H1 (cell line): ENCODE measurements at regions of chr17 and their contacts with region 1.

Region 1: DNA sequence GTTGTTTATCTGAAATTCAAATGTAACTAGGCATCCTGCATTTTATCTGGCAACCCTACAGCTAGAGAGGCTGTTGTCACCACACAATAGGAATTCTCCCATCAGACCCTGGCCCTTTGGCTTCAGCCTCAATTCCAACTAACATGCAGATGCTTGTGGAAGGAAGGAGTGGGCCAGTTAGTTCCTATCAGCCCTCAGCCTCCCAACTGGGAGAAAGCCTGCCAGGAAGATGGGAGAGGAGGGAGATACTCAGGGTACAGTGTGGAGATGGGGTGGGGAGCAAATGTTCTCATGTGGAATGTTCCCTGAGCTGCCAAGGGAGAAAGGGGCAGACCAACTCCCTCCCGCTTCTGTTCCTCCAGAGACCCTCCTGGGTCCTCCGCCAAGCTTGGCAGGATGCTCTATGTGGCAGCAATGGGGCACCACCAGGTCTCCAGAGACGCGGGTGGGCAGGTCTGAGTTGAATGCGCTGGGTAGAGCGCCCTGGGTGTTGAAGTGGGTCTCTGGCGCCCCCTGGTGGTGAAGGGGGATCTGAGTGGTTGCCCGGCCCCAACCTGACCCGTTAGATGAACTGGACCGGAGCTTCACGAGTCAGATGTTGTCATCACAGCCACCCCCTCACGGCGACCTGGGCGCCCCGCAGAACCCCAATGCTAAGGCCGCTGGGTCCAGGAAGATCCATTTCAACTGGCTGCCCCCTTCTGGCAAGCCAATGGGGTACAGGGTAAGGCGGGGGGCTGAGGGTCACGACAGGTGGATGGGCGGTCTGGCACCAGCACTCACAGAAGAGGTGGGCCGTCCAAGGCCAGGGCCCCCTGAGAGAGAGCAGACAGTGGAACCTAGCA is 15.2 kb downstream of the GALK1 start:
- DNase-seq: peak; percentile 54 to 98
- H3K4me3 ChIP-seq: no peak overlapping the region
- H3K27ac ChIP-seq: no peak overlapping the region
- H3K4me1 ChIP-seq: peaks cover 0 to 5% (median 2%) of the 10 kb centered on the region in 4 experiments; a peak in 4 of 7 replicates
- H3K27me3 ChIP-seq: peaks cover 0 to 2% (median 0%) of the 10 kb centered on the region in 4 experiments; a peak in 1 of 7 replicates
- CTCF ChIP-seq: peak; percentile 81 to 92 (median 87)
- EP300 ChIP-seq: no peak
- POLR2A ChIP-seq: no peak
- RAD21 ChIP-seq: peak; percentile 76 to 81

Region 2: DNA sequence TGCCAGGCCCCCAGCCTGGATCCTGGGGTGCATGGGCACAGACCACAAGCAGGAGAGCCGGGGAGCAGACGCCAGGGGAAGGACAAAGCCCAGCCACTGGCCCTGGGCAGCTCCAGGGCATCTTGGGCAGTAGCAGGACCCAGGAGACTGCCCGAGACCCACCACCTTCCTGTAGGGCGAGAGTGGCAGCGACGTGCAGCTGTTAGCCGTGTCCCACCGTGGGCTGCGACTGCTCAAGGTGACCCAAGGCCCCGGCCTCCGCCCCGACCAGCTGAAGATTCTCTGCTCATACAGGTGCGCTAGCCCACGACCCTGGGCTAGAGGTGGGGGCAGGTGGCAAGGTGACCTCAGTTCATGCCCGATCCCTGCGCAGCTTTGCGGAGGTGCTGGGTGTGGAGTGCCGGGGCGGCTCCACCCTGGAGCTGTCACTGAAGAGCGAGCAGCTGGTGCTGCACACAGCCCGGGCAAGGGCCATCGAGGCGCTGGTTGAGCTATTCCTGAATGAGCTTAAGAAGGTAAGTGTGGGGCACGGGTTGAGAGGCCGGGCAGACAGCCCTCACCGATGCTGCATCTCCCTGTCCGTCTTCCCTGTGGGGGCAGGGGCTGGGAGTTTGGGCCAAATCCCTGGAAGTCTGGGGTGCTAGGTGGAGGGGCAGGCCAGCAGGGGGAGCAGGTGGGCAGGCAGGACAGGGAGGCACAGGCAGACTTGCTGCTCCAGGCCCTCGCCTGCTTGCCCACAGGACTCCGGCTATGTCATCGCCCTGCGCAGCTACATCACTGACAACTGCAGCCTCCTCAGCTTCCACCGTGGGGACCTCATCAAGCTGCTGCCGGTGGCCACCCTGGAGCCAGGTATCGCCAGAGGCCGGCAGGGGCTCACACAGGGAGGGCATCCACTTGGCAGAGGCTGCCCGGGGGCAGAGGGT is 130.0 kb before region 1 on chr17:
- CTCF ChIA-PET with region 1: interaction called, 60 read pairs
- POLR2A ChIA-PET with region 1: interaction called, 4 read pairs
- DNase-seq: peak; percentile 70 to 96
- H3K4me3 ChIP-seq: no peak overlapping the region
- H3K27ac ChIP-seq: no peak overlapping the region
- H3K4me1 ChIP-seq: peaks cover 0 to 4% (median 1%) of the 10 kb centered on the region in 4 experiments; a peak in 4 of 7 replicates
- H3K27me3 ChIP-seq: no peaks in the 10 kb centered on the region; a peak in 2 of 7 replicates
- CTCF ChIP-seq: peak; percentile 82 to 96 (median 94)
- EP300 ChIP-seq: no peak
- POLR2A ChIP-seq: no peak; a peak in 1 of 3 replicates
- RAD21 ChIP-seq: peak; percentile 53 to 61

Region 3: GRCh38 chr17:75652915-75653549 is 96.7 kb before region 1 on chr17:
- CTCF ChIA-PET with region 1: interaction called, 155 read pairs
- POLR2A ChIA-PET with region 1: interaction called, 4 read pairs
- DNase-seq: peak in 1 of 2 experiments; percentile 77
- H3K4me3 ChIP-seq: no peak overlapping the region
- H3K27ac ChIP-seq: no peak overlapping the region
- H3K4me1 ChIP-seq: no peaks in the 10 kb centered on the region
- H3K27me3 ChIP-seq: no peaks in the 10 kb centered on the region
- CTCF ChIP-seq: peak; percentile 92 to 94 (median 93)
- EP300 ChIP-seq: no peak
- POLR2A ChIP-seq: no peak
- RAD21 ChIP-seq: peak; percentile 69 to 77

Region 4: GRCh38 chr17:75684924-75685323 is 64.8 kb before region 1 on chr17:
- CTCF ChIA-PET with region 1: interaction called, 40 read pairs
- POLR2A ChIA-PET with region 1: no interaction called
- DNase-seq: no peak
- H3K4me3 ChIP-seq: no peak overlapping the region
- H3K27ac ChIP-seq: no peak overlapping the region
- H3K4me1 ChIP-seq: no peaks in the 10 kb centered on the region
- H3K27me3 ChIP-seq: no peaks in the 10 kb centered on the region
- CTCF ChIP-seq: no peak
- EP300 ChIP-seq: no peak
- POLR2A ChIP-seq: no peak
- RAD21 ChIP-seq: no peak

Region 5: DNA sequence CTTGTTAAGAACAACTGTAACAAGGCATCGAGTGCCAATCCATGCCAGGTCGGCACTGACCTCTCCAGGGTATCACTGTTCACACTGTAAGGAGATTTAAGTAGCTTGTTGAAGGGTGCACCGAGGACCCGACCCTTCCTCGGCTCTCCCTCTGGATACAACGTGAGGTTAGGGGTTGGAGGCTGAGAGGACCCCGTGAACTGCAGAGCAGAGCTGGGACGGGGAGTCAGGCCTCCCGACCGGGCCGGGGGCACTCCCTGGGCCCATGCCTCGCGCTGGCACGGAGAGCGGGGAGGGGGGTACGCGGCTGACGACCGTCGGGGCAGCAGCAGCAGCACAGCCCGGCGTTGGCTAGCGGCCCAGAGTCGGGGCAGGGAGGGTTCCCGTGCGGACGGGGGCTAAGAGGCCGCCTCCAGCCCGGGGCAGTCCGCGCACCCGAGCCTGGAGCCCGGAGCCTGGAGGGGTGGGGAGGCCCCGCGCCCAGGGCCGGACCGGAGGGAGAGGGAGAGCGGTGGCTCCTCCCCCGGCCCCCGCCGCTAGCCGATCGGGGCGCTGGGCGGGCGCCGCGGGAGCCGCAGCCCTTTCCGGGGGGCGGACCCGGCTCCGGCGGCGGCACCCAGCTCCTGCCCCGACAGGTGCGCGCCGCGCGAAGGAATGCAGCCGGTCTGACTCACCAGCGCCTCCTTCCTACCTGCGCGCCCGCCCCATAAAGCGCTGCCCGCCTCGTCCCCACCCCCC is 28.9 kb before region 1 on chr17 and contains the start of gene ITGB4:
- CTCF ChIA-PET with region 1: interaction called, 64 read pairs
- POLR2A ChIA-PET with region 1: interaction called, 7 read pairs
- DNase-seq: peak; percentile 50 to 84
- H3K4me3 ChIP-seq: peak within 1 kb of the TSS; percentile 49 to 74 (median 50)
- H3K27ac ChIP-seq: no peak within 1 kb of the TSS
- H3K4me1 ChIP-seq: peaks cover 0 to 8% (median 4%) of the 10 kb centered on the region in 4 experiments; a peak in 3 of 7 replicates
- H3K27me3 ChIP-seq: peaks cover 4 to 30% (median 17%) of the 10 kb centered on the region in 4 experiments; a peak in 6 of 7 replicates
- CTCF ChIP-seq: peak in 2 of 3 experiments; percentile 1 to 33; a peak in 2 of 4 replicates
- EP300 ChIP-seq: peak in 1 of 2 experiments; percentile 26; a peak in 1 of 3 replicates
- POLR2A ChIP-seq: peak in 1 of 2 experiments; percentile 43; a peak in 1 of 3 replicates
- RAD21 ChIP-seq: no peak
- total RNA-seq, gene ITGB4: 5.4 and 5.6 TPM in 2 replicates

Region 6: DNA sequence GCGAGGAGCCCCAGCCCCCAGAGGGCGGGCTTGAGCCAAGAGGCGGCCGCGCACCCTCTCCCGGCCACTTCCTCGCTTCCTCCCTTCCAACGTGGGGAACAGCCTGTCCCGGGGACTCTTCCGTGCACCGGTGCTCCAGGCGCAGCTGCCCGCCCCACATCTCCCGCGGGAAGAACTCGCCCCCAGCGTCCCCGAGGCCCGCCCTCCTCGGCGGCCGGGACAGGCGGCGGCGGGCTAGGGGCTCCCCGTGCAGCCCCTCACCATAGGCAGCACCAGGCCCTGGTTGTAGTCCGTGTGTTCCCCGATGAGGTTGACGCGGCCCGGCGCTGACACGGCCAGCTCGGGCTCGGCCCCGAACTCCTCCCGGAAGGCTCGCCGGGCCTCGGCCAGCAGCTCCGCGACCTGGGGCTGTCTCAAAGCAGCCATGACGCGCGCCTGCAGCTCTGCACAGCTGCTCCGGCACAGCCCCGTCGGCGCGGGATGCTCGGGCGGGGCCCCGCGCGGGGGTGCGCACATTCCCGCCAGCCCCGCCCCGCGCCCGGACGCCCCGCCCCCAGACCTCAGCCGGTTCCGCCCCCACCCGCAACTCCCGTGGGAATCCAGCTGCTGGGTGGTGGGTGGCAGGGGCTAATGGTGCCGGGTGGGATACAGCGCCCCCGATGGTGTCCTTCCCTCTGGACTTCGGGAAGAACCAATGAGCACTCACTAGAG is 15.1 kb after region 1 on chr17 and contains the start of gene GALK1:
- CTCF ChIA-PET with region 1: interaction called, 359 read pairs
- POLR2A ChIA-PET with region 1: interaction called, 13 read pairs
- DNase-seq: peak in 1 of 2 experiments; percentile 82
- H3K4me3 ChIP-seq: peak within 1 kb of the TSS; percentile 50 to 88 (median 62)
- H3K27ac ChIP-seq: no peak within 1 kb of the TSS
- H3K4me1 ChIP-seq: peaks cover 0 to 8% (median 6%) of the 10 kb centered on the region in 4 experiments; a peak in 5 of 7 replicates
- H3K27me3 ChIP-seq: peaks cover 0 to 2% (median 0%) of the 10 kb centered on the region in 4 experiments; a peak in 1 of 7 replicates
- CTCF ChIP-seq: peak; percentile 67 to 74 (median 67)
- EP300 ChIP-seq: no peak
- POLR2A ChIP-seq: no peak
- RAD21 ChIP-seq: peak; percentile 31 to 45
- total RNA-seq, gene GALK1: 31.0 and 34.1 TPM in 2 replicates

Region 7: GRCh38 chr17:75795820-75796607 is 46.2 kb after region 1 on chr17:
- CTCF ChIA-PET with region 1: no interaction called
- POLR2A ChIA-PET with region 1: no interaction called
- DNase-seq: no peak
- H3K4me3 ChIP-seq: no peak overlapping the region
- H3K27ac ChIP-seq: no peak overlapping the region
- H3K4me1 ChIP-seq: no peaks in the 10 kb centered on the region
- H3K27me3 ChIP-seq: no peaks in the 10 kb centered on the region
- CTCF ChIP-seq: no peak
- EP300 ChIP-seq: no peak
- POLR2A ChIP-seq: no peak
- RAD21 ChIP-seq: no peak

Region 8: GRCh38 chr17:75827252-75828115 is 77.7 kb after region 1 on chr17:
- CTCF ChIA-PET with region 1: interaction called, 22 read pairs
- POLR2A ChIA-PET with region 1: interaction called, 6 read pairs
- DNase-seq: peak; percentile 44 to 96
- H3K4me3 ChIP-seq: peak overlapping the region in 3 of 4 experiments; percentile 27 to 53 (median 45); a peak in 6 of 8 replicates
- H3K27ac ChIP-seq: peak overlapping the region; percentile 43; the same call in 1 of the 2 replicates
- H3K4me1 ChIP-seq: peaks cover 0 to 28% (median 23%) of the 10 kb centered on the region in 4 experiments; a peak in 6 of 7 replicates
- H3K27me3 ChIP-seq: no peaks in the 10 kb centered on the region
- CTCF ChIP-seq: peak; percentile 92 to 97 (median 95)
- EP300 ChIP-seq: 0 out of 3 replicates have a peak, but pooled peaks of 1 of the 2 experiments have one; percentile 13
- POLR2A ChIP-seq: peak in 1 of 2 experiments; percentile 60; a peak in 2 of 3 replicates
- RAD21 ChIP-seq: peak; percentile 27 to 52; a peak in 3 of 4 replicates

Region 9: GRCh38 chr17:75869282-75870141 is 119.7 kb after region 1 on chr17:
- CTCF ChIA-PET with region 1: no interaction called
- POLR2A ChIA-PET with region 1: no interaction called
- DNase-seq: no peak
- H3K4me3 ChIP-seq: no peak overlapping the region
- H3K27ac ChIP-seq: no peak overlapping the region
- H3K4me1 ChIP-seq: peaks cover 0 to 6% (median 2%) of the 10 kb centered on the region in 4 experiments; a peak in 5 of 7 replicates
- H3K27me3 ChIP-seq: no peaks in the 10 kb centered on the region
- CTCF ChIP-seq: no peak
- EP300 ChIP-seq: no peak
- POLR2A ChIP-seq: no peak
- RAD21 ChIP-seq: no peak

Region 10: DNA sequence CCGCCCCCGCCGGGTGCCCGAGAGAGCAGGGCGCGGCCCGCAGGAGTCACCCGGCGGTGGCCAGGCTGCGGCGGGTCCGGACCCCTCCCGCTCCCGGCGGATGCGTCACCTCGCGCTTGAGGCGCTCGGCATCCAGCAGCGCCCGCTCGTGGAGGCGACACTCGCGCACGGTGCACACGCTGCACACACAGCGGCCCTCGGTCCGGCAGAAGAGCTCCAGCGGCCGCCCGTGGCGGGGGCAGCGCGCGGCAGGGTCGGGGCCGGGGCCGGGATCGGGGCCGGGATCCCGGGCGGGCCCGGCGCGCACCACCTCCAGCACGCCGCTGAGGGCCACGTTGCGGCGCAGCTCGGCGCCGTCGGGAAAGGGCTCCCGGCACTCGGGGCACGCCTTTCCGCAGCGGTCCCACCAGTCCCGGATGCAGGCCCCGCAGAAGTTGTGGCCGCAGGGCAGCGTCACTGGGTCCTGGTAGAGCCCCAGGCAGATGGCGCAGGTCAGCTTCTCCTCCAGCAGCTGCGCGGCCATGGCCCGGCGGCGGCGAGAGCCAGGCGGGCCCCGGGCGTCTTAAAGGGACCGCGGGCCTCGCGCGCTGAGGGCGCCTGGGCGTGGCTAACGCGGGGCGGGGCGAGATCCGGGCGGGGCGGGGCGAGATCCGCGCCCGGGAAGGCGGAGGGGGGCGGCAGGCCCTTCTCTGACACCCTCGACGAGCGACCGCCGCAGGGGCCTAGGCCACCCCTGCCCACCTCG is 146.8 kb after region 1 on chr17 and contains the start of gene TRIM65:
- CTCF ChIA-PET with region 1: no interaction called
- POLR2A ChIA-PET with region 1: no interaction called
- DNase-seq: peak in 1 of 2 experiments; percentile 92
- H3K4me3 ChIP-seq: peak within 1 kb of the TSS; percentile 58 to 96 (median 80)
- H3K27ac ChIP-seq: peak within 1 kb of the TSS; percentile 59; the same call in 1 of the 2 replicates
- H3K4me1 ChIP-seq: peaks cover 4 to 25% (median 13%) of the 10 kb centered on the region in 4 experiments
- H3K27me3 ChIP-seq: no peaks in the 10 kb centered on the region
- CTCF ChIP-seq: no peak
- EP300 ChIP-seq: no peak
- POLR2A ChIP-seq: peak; percentile 88 to 94
- RAD21 ChIP-seq: no peak
- total RNA-seq, gene TRIM65: 47.7 and 48.6 TPM in 2 replicates